Activated CD4-positive, alpha-beta memory T cell treated with anti-CD3 and anti-CD28 coated beads for 36 hours (primary cell): ENCODE measurements at regions of chr7 and their contacts with region 1.

Region 1: GRCh38 chr7:128209229-128210035 is 31.6 kb upstream of the LEP start:
- DNase-seq: peak; percentile 78
- H3K4me3 Mint-ChIP-seq: no peak overlapping the region
- H3K27ac Mint-ChIP-seq: no peak overlapping the region
- H3K4me1 Mint-ChIP-seq: no peaks in the 10 kb centered on the region
- H3K27me3 Mint-ChIP-seq: peaks cover 12% of the 10 kb centered on the region

Region 2: DNA sequence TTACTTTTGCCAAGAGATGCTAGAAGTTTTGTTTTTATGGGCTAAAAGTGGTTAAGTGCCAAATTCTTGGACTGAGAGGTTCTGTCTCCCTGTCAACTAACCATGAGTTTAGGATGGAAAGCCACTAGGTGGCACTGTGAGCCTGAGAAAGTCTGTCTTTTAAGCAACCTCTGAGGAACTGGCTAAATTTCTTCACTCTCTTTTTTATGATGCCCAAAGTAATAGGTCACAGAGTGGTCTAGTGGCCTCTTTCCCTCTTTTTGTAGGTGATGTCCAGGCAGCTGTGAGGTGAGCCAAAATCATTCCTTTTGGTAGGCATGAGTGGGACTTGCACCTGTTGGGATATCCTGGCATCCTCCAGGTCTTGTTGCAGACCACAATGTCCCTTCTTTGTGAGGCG is 500.6 kb before region 1 on chr7:
- CTCF ChIA-PET with region 1: interaction called, 126 read pairs
- POLR2A ChIA-PET with region 1: no interaction called
- intact Hi-C with region 1: loop called (anchors 1 kb)
- DNase-seq: peak; percentile 74
- H3K4me3 Mint-ChIP-seq: no peak overlapping the region
- H3K27ac Mint-ChIP-seq: no peak overlapping the region
- H3K4me1 Mint-ChIP-seq: peaks cover 5% of the 10 kb centered on the region
- H3K27me3 Mint-ChIP-seq: no peaks in the 10 kb centered on the region

Region 3: GRCh38 chr7:128031901-128032604 is 177.4 kb before region 1 on chr7:
- CTCF ChIA-PET with region 1: interaction called, 12 read pairs
- POLR2A ChIA-PET with region 1: no interaction called
- intact Hi-C with region 1: loop called (anchors 10 kb)
- DNase-seq: peak; percentile 76
- H3K4me3 Mint-ChIP-seq: peak overlapping the region; percentile 72
- H3K27ac Mint-ChIP-seq: no peak overlapping the region
- H3K4me1 Mint-ChIP-seq: peaks cover 17% of the 10 kb centered on the region
- H3K27me3 Mint-ChIP-seq: no peaks in the 10 kb centered on the region

Region 4: GRCh38 chr7:128135515-128136214 is 73.8 kb before region 1 on chr7:
- CTCF ChIA-PET with region 1: interaction called, 139 read pairs
- POLR2A ChIA-PET with region 1: interaction called, 8 read pairs
- intact Hi-C with region 1: loop called (anchors 1 kb)
- DNase-seq: peak; percentile 75
- H3K4me3 Mint-ChIP-seq: peak overlapping the region; percentile 62
- H3K27ac Mint-ChIP-seq: no peak overlapping the region
- H3K4me1 Mint-ChIP-seq: peaks cover 12% of the 10 kb centered on the region
- H3K27me3 Mint-ChIP-seq: peaks cover 31% of the 10 kb centered on the region

Region 5: GRCh38 chr7:128172147-128172546 is 37.3 kb before region 1 on chr7:
- CTCF ChIA-PET with region 1: interaction called, 10 read pairs
- POLR2A ChIA-PET with region 1: no interaction called
- intact Hi-C with region 1: no loop called
- DNase-seq: no peak
- H3K4me3 Mint-ChIP-seq: no peak overlapping the region
- H3K27ac Mint-ChIP-seq: no peak overlapping the region
- H3K4me1 Mint-ChIP-seq: peaks cover 11% of the 10 kb centered on the region
- H3K27me3 Mint-ChIP-seq: peaks cover 37% of the 10 kb centered on the region

Region 6: GRCh38 chr7:128266883-128267607 is 57.6 kb after region 1 on chr7:
- CTCF ChIA-PET with region 1: no interaction called
- POLR2A ChIA-PET with region 1: no interaction called
- intact Hi-C with region 1: no loop called
- DNase-seq: no peak
- H3K4me3 Mint-ChIP-seq: no peak overlapping the region
- H3K27ac Mint-ChIP-seq: no peak overlapping the region
- H3K4me1 Mint-ChIP-seq: no peaks in the 10 kb centered on the region
- H3K27me3 Mint-ChIP-seq: peaks cover 18% of the 10 kb centered on the region